Ovary (tissue), 10 donors: ENCODE measurements at regions of chr3 and their contacts with region 1.

Region 1: GRCh38 chr3:17227472-17227871 is 342.7 kb downstream of the PLCL2 start:
- DNase-seq: no peak
- H3K4me3 ChIP-seq: no peak overlapping the region
- H3K27ac ChIP-seq: no peak overlapping the region
- H3K4me1 ChIP-seq: no peaks in the 10 kb centered on the region
- H3K27me3 ChIP-seq: no peaks in the 10 kb centered on the region
- CTCF ChIP-seq: no peak
- EP300 ChIP-seq: no peak
- POLR2A ChIP-seq: no peak

Region 2: DNA sequence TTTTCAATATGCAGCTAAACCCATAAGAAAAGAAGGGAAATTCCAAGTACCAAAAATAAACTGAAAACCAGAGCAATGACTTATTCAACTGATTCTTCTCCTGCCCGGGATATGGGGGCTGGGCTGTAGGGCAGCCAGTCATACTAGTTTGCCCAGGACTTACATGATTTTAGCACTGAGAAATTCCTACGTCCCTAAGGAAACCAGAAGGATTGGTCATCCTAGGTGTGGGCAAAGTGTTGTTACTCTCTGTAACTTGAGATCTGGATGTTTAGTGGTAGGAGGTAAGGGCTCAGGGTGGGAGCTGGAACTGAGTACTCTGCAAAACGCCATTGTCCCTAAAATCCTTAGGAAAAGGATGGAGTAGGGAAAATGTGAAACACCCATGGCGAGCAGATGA is 621.1 kb before region 1 on chr3:
- intact Hi-C with region 1: loop called in 1 of 4 experiments (anchors 5 kb)
- DNase-seq: no peak
- H3K4me3 ChIP-seq: no peak overlapping the region
- H3K27ac ChIP-seq: no peak overlapping the region
- H3K4me1 ChIP-seq: no peaks in the 10 kb centered on the region
- H3K27me3 ChIP-seq: no peaks in the 10 kb centered on the region
- CTCF ChIP-seq: no peak
- EP300 ChIP-seq: no peak
- POLR2A ChIP-seq: no peak

Region 3: GRCh38 chr3:16888785-16889607 is 338.5 kb before region 1 on chr3:
- intact Hi-C with region 1: no loop called
- DNase-seq: no peak
- H3K4me3 ChIP-seq: no peak overlapping the region
- H3K27ac ChIP-seq: peak overlapping the region in 1 of 2 donors; percentile 44
- H3K4me1 ChIP-seq: peaks cover 6% of the 10 kb centered on the region
- H3K27me3 ChIP-seq: no peaks in the 10 kb centered on the region
- CTCF ChIP-seq: no peak
- EP300 ChIP-seq: no peak
- POLR2A ChIP-seq: no peak